Ascending aorta (tissue), 2 donors: ENCODE measurements at regions of chr19 and their contacts with region 1.

Region 1: DNA sequence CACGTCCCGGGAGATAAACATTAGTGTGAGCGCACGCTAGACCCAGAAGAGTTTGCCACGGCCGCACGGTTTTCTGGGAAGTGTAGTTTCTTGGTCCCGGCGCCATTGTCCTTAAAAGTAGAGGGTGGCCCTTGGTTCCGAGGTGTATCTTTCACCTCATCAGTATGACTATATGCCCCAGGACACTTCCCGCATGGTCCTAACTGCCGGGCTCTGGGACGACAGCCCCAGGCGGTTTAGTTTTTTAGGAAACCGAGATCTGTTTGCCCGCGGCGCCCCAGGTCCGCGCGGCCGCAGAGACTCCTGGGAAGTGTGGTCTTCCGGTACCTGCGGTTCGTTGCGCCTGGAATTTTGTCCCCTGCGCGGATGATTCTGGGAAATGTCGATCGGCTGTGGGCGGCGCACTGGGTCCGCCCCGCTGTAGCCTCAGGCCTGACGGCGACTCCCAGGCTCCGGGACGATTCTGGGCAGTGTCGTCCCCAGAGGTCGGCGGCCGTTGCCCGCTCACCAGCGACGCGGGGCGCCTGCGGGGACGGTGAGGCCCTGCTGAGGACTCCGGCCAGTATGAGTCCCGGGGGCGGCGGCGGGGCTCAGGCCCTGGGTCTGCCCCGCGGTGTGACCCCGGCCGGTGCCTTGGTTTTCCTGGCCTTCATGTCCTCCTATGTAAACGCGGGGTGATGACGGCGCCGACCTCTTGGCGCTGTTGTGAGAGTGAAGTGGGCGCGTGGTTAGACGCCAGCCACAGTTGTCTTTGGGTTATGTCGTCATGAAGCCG is at the start of gene ZNF181:
- DNase-seq: peak; percentile 42 to 94
- H3K4me3 ChIP-seq: peak within 1 kb of the TSS; percentile 62 to 94
- H3K27ac ChIP-seq: peak within 1 kb of the TSS; percentile 97 to 98
- H3K4me1 ChIP-seq: peaks cover 9 to 22% of the 10 kb centered on the region in 2 donors
- H3K27me3 ChIP-seq: no peaks in the 10 kb centered on the region
- CTCF ChIP-seq: no peak
- total RNA-seq, gene ZNF181: 1.9 TPM

Region 2: DNA sequence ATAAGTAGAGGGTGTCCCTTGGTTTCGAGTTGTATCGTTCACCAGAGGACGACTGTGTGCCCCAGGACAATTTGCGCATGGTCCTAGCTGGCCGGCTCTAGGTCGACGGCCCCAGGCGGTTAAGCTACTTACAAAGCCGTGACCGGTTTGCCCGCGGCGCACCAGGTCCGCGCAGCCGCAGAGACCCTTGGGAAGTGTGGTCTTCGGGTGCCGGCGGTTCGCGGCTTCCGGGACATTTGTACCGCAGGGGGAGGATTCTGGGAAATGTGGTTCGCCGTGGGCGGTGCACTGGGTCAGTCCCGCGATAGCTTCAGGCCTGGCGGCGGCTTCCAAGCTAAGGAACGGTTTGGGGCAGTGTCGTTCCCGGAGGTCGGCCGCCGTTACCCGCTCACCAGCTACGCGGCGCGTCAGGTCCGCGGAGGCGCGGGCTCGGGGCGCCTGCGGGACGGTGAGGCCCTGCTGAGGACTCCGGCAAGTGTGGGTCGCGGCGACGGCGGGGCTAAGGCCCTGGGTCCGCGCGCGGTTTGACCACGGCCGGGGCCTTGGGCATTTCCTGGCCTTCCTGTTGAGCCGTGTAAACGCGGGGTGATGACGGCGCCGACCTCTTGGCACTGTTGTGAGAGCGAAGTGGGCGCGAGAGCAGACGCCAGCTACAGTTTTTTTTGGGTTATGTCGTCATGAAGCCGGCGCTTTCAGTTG is 56.5 kb before region 1 on chr19 and contains the start of gene ZNF302:
- intact Hi-C with region 1: loop called (anchors 1 kb)
- DNase-seq: peak; percentile 86 to 98
- H3K4me3 ChIP-seq: peak within 1 kb of the TSS; percentile 83 to 85
- H3K27ac ChIP-seq: peak within 1 kb of the TSS; percentile 99
- H3K4me1 ChIP-seq: peaks cover 0 to 9% of the 10 kb centered on the region in 2 donors
- H3K27me3 ChIP-seq: no peaks in the 10 kb centered on the region
- CTCF ChIP-seq: no peak
- total RNA-seq, gene ZNF302: 42.0 TPM

Region 3: GRCh38 chr19:34766386-34766785 is 32.4 kb after region 1 on chr19:
- intact Hi-C with region 1: no loop called
- DNase-seq: no peak
- H3K4me3 ChIP-seq: no peak overlapping the region
- H3K27ac ChIP-seq: no peak overlapping the region
- H3K4me1 ChIP-seq: no peaks in the 10 kb centered on the region
- H3K27me3 ChIP-seq: no peaks in the 10 kb centered on the region
- CTCF ChIP-seq: no peak